Right ventricle myocardium superior (tissue), 1 donor: ENCODE measurements at regions of chr6 and their contacts with region 1.

Region 1: GRCh38 chr6:32796848-32797776 is 19.7 kb downstream of the HLA-DOB start:
- DNase-seq: peak; percentile 84
- ATAC-seq: peak; percentile 78

Region 2: DNA sequence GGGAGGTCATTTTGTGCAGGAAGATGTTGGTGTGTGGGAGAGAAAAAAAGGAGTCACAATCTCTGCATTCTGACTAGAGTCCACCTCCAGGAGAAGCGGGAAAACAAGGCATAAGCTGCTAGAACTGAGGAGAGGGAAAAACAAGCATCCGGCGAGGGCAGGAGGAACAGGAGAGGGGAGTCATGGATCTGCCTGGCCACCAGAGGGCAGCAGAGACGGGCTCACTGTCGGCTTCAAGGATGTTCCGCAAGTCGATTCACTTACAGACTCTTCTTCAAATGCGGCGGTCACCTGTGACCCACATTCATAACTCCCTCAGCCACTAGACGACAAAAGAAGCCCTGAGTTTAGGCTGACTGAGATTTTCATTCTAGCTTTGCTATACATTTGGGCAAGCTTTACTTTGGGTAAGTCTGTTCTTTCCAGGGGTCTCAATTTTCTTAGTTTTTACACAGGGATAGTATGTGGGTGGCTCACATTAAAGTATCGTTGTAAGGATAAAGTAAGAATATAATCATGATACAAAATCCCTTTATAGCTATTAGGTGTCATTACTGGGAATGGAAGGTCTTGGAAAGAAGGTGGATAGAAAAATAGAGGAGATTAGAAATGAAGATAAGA is 383.6 kb before region 1 on chr6:
- intact Hi-C with region 1: loop called (anchors 2 kb)
- DNase-seq: peak; percentile 85
- ATAC-seq: peak; percentile 88

Region 3: GRCh38 chr6:32700391-32701040 is 96.6 kb before region 1 on chr6:
- intact Hi-C with region 1: loop called (anchors 10 kb)
- DNase-seq: no peak
- ATAC-seq: peak; percentile 75